Activated naive CD8-positive, alpha-beta T cell treated with anti-CD3 and anti-CD28 coated beads, Interleukin-2, amount 10 ng/mL, durations not matched to agents 7 days and 5 days (primary cell): ENCODE measurements at regions of chr6 and their contacts with region 1.

Region 1: DNA sequence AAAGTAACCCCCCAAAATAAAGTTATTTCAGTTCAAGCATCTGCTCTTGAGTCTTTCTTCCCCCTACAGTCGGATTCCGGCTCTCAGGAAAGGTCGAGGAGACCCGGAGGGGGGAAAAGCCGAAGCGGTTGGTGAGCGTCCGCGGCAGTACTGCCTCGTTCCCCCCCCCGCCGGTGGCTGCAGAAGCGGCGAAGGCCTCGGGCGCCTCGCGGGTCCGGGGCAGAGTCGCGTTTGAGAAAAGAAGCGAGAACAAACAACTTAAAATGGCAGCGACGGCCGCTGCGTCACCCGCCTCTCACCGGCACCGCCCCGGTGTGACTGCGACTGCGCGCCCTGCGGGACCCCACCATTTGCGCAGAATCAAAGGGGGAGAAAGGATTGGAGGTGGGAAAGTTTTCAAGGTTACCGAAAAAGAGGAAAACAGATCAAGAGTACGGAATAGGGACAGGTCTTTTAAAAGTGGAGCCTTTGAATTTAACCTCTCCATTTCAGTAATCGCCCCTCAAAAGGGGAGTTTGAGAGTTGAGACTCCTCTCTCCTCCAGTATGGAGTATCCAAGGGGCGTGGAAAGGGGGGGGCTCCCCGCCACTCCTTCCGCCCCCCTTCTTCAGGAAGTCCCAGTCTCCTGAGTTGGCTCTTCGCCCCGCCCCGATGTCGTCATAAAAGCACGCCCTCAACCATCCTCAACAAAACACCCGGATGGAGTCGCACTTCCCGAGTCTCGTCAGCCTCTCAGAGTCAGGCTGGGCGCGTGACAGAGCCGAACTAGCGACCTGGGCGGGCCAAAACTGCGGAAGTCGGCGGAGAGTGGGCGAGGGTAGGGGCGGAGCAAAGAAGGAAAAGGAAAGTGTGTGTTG is 1.9 kb upstream of the C6orf62 start:
- DNase-seq: peak; percentile 98
- ATAC-seq: peak; percentile 92
- H3K4me3 Mint-ChIP-seq: peak overlapping the region; percentile 93
- H3K27ac Mint-ChIP-seq: peak overlapping the region; percentile 100
- H3K4me1 Mint-ChIP-seq: peaks cover 32% of the 10 kb centered on the region
- H3K27me3 Mint-ChIP-seq: no peaks in the 10 kb centered on the region

Region 2: GRCh38 chr6:24666641-24667377 is 54.0 kb before region 1 on chr6 and contains the starts of genes ACOT13 and TDP2:
- POLR2A ChIA-PET with region 1: interaction called, 18 read pairs
- DNase-seq: peak; percentile 96
- ATAC-seq: peak; percentile 96
- H3K4me3 Mint-ChIP-seq: peak within 1 kb of the TSS; percentile 97
- H3K27ac Mint-ChIP-seq: peak within 1 kb of the TSS; percentile 97
- H3K4me1 Mint-ChIP-seq: peaks cover 38% of the 10 kb centered on the region
- H3K27me3 Mint-ChIP-seq: no peaks in the 10 kb centered on the region
- total RNA-seq, gene ACOT13: 16.6 to 20.6 TPM
- total RNA-seq, gene TDP2: 48.9 to 54.5 TPM

Region 3: DNA sequence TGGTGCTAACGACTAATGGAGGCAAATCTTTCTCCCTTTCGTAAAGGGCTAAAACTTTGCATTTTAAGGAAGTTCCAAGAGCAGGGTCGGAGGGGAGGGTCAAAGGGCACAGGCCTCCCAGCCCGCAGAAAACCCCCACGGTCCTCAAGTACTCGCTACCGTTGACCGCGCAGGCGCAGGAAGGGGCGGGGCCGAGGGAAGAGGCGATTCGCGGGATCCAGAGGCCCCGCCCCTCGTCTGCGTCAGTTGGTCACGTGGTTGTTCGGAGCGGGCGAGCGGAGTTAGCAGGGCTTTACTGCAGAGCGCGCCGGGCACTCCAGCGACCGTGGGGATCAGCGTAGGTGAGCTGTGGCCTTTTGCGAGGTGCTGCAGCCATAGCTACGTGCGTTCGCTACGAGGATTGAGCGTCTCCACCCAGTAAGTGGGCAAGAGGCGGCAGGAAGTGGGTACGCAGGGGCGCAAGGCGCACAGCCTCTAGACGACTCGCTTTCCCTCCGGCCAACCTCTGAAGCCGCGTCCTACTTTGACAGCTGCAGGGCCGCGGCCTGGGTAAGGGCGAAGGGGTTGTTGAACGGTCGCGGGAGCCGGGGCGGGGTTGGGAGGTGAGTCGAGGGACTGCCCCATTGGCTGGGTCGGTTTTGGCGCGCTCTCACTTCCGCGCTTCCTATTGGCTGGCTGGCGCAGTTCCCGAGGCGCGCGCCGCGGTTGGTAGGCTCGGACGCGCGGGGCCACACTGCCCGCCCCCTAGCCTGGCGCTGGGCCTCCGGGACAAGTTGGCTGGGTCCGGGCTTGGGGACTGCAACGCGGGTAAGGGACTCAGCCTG is 54.1 kb after region 1 on chr6 and contains the start of gene GMNN:
- POLR2A ChIA-PET with region 1: interaction called, 18 read pairs
- DNase-seq: peak; percentile 99
- ATAC-seq: peak; percentile 95
- H3K4me3 Mint-ChIP-seq: peak within 1 kb of the TSS; percentile 98
- H3K27ac Mint-ChIP-seq: peak within 1 kb of the TSS; percentile 99
- H3K4me1 Mint-ChIP-seq: peaks cover 26% of the 10 kb centered on the region
- H3K27me3 Mint-ChIP-seq: no peaks in the 10 kb centered on the region
- total RNA-seq, gene GMNN: 50.1 to 53.5 TPM